Activated B cell treated with CpG ODN at 0.5 μM for 24 hours (primary cell): ENCODE measurements at regions of chr13 and their contacts with region 1.

Region 1: GRCh38 chr13:50911937-50912795 is 2.6 kb downstream of the RNASEH2B start:
- DNase-seq: peak; percentile 82
- ATAC-seq: peak; percentile 58
- H3K4me3 Mint-ChIP-seq: peak overlapping the region; percentile 93
- H3K27ac Mint-ChIP-seq: peak overlapping the region; percentile 97
- H3K4me1 Mint-ChIP-seq: peaks cover 71% of the 10 kb centered on the region
- H3K27me3 Mint-ChIP-seq: no peaks in the 10 kb centered on the region
- CTCF ChIP-seq: no peak

Region 2: DNA sequence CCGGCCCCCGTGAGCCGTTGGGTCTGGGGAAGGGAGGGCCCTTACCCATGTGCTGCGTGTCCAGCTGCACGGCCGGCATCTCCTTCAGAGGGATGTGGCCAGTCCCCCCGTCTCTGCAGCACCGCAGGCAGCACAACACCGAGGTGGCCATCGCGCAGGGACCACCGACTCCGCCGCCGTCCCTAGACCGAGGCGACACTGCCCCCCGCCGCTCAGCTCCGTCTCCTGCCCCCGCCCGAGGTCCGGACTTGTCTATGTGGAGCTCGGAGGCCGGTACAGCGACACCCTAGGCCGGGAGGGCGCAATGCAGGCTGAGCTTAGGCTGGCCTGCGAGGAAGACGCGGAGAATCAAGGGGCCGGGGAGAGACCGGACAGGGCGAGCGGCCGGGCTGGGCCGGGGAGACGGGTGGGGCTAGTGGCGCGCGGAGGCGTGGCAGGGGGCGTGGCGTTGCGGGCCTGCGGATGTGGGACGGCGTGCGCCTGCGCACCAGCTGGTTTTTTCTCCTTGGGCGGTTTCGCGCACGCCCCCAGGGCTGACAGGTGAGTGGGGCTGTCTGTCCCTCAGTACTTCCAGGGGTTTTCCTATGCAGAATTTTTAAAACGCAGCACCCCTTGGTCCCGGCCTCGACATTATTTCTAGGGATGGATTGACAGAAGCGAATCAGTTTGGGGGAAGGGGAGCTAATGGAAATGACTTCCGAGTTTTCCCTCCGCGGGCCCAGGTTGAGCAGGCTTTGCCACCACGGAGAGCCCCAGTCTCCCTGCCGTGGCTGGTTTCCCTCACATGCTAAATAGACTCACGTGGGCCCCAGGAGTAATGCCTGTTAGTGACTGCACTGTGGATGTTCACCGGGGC is 975.9 kb before region 1 on chr13 and contains the start of gene SPRYD7:
- CTCF ChIA-PET with region 1: interaction called, 12 read pairs
- POLR2A ChIA-PET with region 1: interaction called, 10 read pairs
- intact Hi-C with region 1: loop called (anchors 1 kb)
- DNase-seq: peak; percentile 100
- ATAC-seq: peak; percentile 98
- H3K4me3 Mint-ChIP-seq: peak within 1 kb of the TSS; percentile 97
- H3K27ac Mint-ChIP-seq: peak within 1 kb of the TSS; percentile 91
- H3K4me1 Mint-ChIP-seq: peaks cover 32% of the 10 kb centered on the region
- H3K27me3 Mint-ChIP-seq: no peaks in the 10 kb centered on the region
- CTCF ChIP-seq: no peak
- total RNA-seq, gene SPRYD7: 3.7 and 4.5 TPM in 2 replicates

Region 3: GRCh38 chr13:50236898-50237318 is 675.3 kb before region 1 on chr13:
- CTCF ChIA-PET with region 1: interaction called, 6 read pairs
- POLR2A ChIA-PET with region 1: interaction called, 7 read pairs
- intact Hi-C with region 1: loop called (anchors 2 kb)
- DNase-seq: no peak
- ATAC-seq: peak; percentile 90
- H3K4me3 Mint-ChIP-seq: peak overlapping the region; percentile 55
- H3K27ac Mint-ChIP-seq: peak overlapping the region; percentile 92
- H3K4me1 Mint-ChIP-seq: peaks cover 53% of the 10 kb centered on the region
- H3K27me3 Mint-ChIP-seq: no peaks in the 10 kb centered on the region
- CTCF ChIP-seq: no peak

Region 4: GRCh38 chr13:50512474-50513299 is 399.5 kb before region 1 on chr13:
- CTCF ChIA-PET with region 1: interaction called, 3 read pairs
- POLR2A ChIA-PET with region 1: interaction called, 19 read pairs
- intact Hi-C with region 1: loop called (anchors 1 kb)
- DNase-seq: peak; percentile 40
- ATAC-seq: peak; percentile 81
- H3K4me3 Mint-ChIP-seq: no peak overlapping the region
- H3K27ac Mint-ChIP-seq: no peak overlapping the region
- H3K4me1 Mint-ChIP-seq: peaks cover 3% of the 10 kb centered on the region
- H3K27me3 Mint-ChIP-seq: no peaks in the 10 kb centered on the region
- CTCF ChIP-seq: no peak

Region 5: GRCh38 chr13:50760751-50761150 is 151.4 kb before region 1 on chr13:
- CTCF ChIA-PET with region 1: interaction called, 6 read pairs
- POLR2A ChIA-PET with region 1: interaction called, 8 read pairs
- intact Hi-C with region 1: loop called (anchors 5 kb)
- DNase-seq: no peak
- ATAC-seq: no peak
- H3K4me3 Mint-ChIP-seq: no peak overlapping the region
- H3K27ac Mint-ChIP-seq: no peak overlapping the region
- H3K4me1 Mint-ChIP-seq: peaks cover 53% of the 10 kb centered on the region
- H3K27me3 Mint-ChIP-seq: no peaks in the 10 kb centered on the region
- CTCF ChIP-seq: no peak

Region 6: DNA sequence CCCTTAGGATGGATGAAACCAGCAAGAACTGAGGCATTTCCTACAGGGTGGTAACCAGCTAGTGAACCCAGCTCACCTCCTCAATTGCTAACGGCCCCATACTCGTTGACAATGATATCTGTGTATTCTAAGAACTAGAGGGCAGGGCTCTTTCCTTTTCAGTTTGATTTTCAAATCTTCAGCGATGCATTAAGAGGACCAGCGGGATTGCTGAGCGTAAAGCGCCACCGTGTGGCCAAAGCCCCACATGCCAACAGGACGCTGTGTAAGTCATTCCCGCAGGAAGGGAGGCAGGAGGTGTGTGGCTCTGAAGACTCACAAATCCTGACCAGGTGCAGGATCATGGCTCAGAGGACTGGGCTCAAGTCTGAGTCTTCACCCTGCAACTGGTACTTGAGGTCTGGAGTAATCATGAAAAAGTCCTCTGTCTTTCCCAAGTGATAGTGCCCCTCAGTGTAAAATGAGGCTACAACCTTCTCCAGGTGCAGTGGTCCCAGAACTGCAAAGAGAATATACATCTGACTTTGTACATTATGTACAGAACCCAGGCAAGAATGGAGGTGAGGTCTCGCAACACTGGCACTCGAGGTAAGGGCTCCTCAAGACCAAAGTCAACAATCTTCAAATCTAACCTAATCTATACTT is 158.0 kb after region 1 on chr13:
- CTCF ChIA-PET with region 1: interaction called, 6 read pairs
- POLR2A ChIA-PET with region 1: no interaction called
- intact Hi-C with region 1: loop called (anchors 1 kb)
- DNase-seq: peak; percentile 68
- ATAC-seq: peak; percentile 92
- H3K4me3 Mint-ChIP-seq: no peak overlapping the region
- H3K27ac Mint-ChIP-seq: no peak overlapping the region
- H3K4me1 Mint-ChIP-seq: peaks cover 7% of the 10 kb centered on the region
- H3K27me3 Mint-ChIP-seq: peaks cover 28% of the 10 kb centered on the region
- CTCF ChIP-seq: peak; percentile 96